Psoas muscle (tissue), 8 donors: ENCODE measurements at regions of chr9 and their contacts with region 1.

Region 1: DNA sequence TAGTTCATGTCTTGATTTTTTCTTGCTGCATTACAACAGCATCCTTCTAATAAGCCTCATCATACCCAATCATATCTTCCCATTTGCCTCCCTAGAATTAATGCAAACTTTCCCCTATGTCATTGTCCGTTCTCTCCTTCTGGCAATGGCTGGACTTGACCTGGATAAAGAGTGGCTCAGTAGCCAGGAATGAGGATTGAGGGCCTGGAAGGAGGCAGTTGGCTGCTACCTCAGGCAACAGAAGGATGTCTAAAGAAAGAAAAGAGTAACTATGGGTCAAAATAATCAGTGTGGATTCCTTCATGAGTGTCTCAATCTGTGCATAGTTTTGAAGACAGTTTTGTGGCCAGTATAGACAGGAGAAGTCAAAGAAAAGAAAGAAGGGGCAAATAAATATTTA is 209.6 kb downstream of the TRPM3 start:
- DNase-seq: no peak
- ATAC-seq: no peak
- H3K4me3 ChIP-seq: no peak overlapping the region
- H3K27ac ChIP-seq: no peak overlapping the region
- H3K4me1 ChIP-seq: no peaks in the 10 kb centered on the region
- H3K27me3 ChIP-seq: no peaks in the 10 kb centered on the region
- CTCF ChIP-seq: no peak

Region 2: DNA sequence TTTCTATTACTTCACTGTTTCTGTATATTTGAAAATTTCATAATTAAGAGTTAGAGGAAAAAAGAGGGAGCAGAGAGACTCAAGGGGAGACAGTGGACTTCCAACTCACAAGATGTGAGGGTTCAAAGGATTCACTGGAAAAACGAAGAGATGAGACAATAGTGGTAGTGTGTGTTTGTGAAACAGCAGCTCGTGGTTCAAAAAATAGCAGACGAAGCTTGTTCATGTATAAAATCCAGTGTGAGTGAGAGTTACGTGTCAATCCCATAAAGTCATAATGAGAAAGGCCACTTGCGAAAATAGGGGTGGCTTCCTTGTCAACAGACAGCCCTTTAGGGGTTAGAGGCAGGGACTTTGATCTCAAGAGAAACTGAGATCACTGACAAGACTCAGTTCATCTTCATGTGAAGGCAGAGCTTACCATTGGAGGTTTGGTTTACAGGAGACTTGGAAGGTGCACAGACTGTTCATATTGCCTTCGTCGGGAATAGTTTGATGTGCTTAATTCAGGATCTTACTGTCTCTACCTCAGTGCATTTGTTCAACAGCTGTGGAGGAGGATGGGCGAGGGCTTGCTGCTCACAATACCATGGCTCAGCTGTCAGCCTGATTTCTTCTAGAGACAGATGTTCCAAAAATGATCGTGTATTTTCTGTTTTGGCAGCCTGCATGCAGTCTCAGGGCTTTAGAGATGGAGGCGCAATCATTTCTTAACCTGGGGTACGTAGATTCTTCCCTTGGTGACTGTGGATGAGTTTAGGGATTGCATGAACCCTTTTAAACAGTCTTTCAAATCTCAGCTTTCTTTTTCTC is 391.7 kb before region 1 on chr9:
- intact Hi-C with region 1: no loop called
- DNase-seq: no peak
- ATAC-seq: no peak
- H3K4me3 ChIP-seq: no peak overlapping the region
- H3K27ac ChIP-seq: no peak overlapping the region
- H3K4me1 ChIP-seq: no peaks in the 10 kb centered on the region
- H3K27me3 ChIP-seq: no peaks in the 10 kb centered on the region
- CTCF ChIP-seq: no peak

Region 3: DNA sequence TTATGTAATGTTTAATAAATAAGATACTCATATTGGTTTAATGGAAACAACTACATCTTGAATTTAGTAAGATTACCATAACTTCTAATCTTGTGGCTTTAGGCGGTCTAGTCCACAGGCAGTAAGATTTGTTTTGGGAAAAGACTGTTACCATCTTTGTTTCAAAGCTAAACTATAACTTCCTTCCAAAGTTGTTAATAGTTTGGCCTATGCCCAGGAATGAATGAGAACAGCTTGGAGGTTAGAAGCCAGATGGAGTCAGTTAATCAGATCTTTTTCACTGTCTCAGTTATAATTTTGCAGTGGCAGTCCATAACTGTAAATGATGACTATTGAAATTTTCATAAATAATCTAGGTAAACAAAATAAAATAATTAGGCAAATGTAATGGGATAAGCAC is 255.5 kb before region 1 on chr9:
- intact Hi-C with region 1: loop called in 1 of 2 experiments (anchors 10 kb)
- DNase-seq: no peak
- ATAC-seq: no peak
- H3K4me3 ChIP-seq: no peak overlapping the region
- H3K27ac ChIP-seq: no peak overlapping the region
- H3K4me1 ChIP-seq: no peaks in the 10 kb centered on the region
- H3K27me3 ChIP-seq: no peaks in the 10 kb centered on the region
- CTCF ChIP-seq: no peak

Region 4: GRCh38 chr9:70811638-70812037 is 100.2 kb before region 1 on chr9:
- intact Hi-C with region 1: no loop called
- DNase-seq: no peak
- ATAC-seq: no peak
- H3K4me3 ChIP-seq: no peak overlapping the region
- H3K27ac ChIP-seq: no peak overlapping the region
- H3K4me1 ChIP-seq: no peaks in the 10 kb centered on the region
- H3K27me3 ChIP-seq: peaks cover 0 to 3% (median 0%) of the 10 kb centered on the region in 3 donors
- CTCF ChIP-seq: no peak

Region 5: DNA sequence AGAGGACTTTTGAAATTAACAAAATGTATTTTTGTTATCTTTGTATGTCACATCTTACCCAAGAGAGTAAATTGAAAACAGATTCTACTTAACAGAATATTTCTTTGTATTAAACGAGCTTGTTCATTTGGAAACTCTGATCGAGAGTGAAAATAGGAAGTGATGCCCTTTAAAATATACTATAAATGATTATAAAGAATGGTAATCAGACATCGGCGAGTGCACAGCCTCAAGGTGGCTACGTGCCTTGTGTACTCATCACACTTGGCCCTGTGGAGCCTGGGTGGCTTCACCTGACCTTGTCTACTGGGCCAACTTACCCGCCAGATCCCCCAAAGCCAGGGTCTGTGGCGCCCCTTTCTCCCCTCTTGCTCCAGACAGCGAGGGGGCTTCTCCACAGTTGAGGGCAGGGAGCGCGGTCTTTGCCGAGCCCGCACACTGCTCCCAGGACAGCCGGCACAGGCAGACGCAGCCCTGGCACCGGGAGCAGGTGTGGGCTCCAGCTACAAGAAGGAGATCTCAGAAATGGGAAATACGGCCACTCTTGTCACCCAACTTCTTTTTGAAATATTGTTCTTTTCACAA is 613.3 kb after region 1 on chr9:
- intact Hi-C with region 1: no loop called
- DNase-seq: no peak
- ATAC-seq: no peak
- H3K4me3 ChIP-seq: no peak overlapping the region
- H3K27ac ChIP-seq: no peak overlapping the region
- H3K4me1 ChIP-seq: no peaks in the 10 kb centered on the region
- H3K27me3 ChIP-seq: no peaks in the 10 kb centered on the region
- CTCF ChIP-seq: no peak